Natural killer cell (primary cell): ENCODE measurements at regions of chr9 and their contacts with region 1.

Region 1: GRCh38 chr9:6757456-6758247 is at the start of gene KDM4C:
- DNase-seq: peak; percentile 94 to 98
- ATAC-seq: peak; percentile 75 to 93 (median 83)
- H3K4me3 ChIP-seq: peak within 1 kb of the TSS; percentile 70
- H3K4me3 Mint-ChIP-seq: peak within 1 kb of the TSS; percentile 97
- H3K27ac ChIP-seq: peak within 1 kb of the TSS; percentile 96
- H3K27ac Mint-ChIP-seq: peak within 1 kb of the TSS; percentile 98 to 99
- H3K4me1 ChIP-seq: peaks cover 16% of the 10 kb centered on the region
- H3K4me1 Mint-ChIP-seq: peaks cover 29 to 47% of the 10 kb centered on the region in 2 donors
- H3K27me3 ChIP-seq: no peaks in the 10 kb centered on the region
- H3K27me3 Mint-ChIP-seq: no peaks in the 10 kb centered on the region
- CTCF ChIP-seq: no peak
- total RNA-seq, gene KDM4C: 115 to 137 (median 116) TPM

Region 2: DNA sequence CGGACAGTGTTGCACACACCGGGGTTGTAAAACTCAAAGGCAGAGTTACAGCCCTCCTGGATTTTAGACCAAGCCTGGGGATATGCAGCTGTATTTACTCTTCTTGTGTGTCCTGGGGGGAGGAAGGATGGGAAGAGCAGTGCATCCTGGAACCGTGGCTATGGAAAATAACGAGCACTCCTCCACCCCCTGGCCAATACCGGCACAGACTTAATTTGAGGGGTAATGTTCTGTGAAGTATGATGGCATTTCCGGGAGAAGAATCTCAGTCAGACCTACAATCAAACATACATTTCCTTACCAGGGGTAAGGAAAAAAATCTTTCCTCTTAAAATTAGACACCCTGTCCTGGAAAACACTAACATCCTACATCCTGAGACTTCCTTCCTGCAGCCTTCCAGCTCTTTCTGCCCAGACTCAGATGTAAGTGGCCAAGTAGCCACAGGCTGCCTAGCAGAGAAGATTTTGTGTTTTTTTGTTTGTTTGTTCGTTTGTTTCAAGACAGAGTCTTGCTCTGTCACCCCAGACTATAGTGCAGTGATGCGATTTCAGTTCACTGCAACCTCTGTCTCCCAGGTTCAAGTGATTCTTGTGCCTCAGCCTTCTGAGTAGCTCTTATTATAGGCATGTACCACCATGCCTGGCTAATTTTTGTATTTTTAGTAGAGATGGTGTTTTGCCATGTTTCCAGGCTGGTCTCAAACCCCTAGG is 913.7 kb before region 1 on chr9:
- intact Hi-C with region 1: loop called (anchors 5 kb)
- DNase-seq: peak in 1 of 2 donors; percentile 31
- ATAC-seq: peak in 1 of 3 donors; percentile 27
- H3K4me3 ChIP-seq: no peak overlapping the region
- H3K4me3 Mint-ChIP-seq: peak overlapping the region; percentile 79
- H3K27ac ChIP-seq: peak overlapping the region; percentile 54
- H3K27ac Mint-ChIP-seq: peak overlapping the region; percentile 91
- H3K4me1 ChIP-seq: peaks cover 73% of the 10 kb centered on the region
- H3K4me1 Mint-ChIP-seq: peaks cover 78 to 85% of the 10 kb centered on the region in 2 donors
- H3K27me3 ChIP-seq: no peaks in the 10 kb centered on the region
- H3K27me3 Mint-ChIP-seq: no peaks in the 10 kb centered on the region
- CTCF ChIP-seq: no peak

Region 3: GRCh38 chr9:6356441-6356840 is 401.2 kb before region 1 on chr9:
- intact Hi-C with region 1: no loop called
- DNase-seq: no peak
- ATAC-seq: no peak
- H3K4me3 ChIP-seq: no peak overlapping the region
- H3K4me3 Mint-ChIP-seq: no peak overlapping the region
- H3K27ac ChIP-seq: no peak overlapping the region
- H3K27ac Mint-ChIP-seq: no peak overlapping the region
- H3K4me1 ChIP-seq: no peaks in the 10 kb centered on the region
- H3K4me1 Mint-ChIP-seq: peaks cover 0 to 5% of the 10 kb centered on the region in 2 donors
- H3K27me3 ChIP-seq: no peaks in the 10 kb centered on the region
- H3K27me3 Mint-ChIP-seq: peaks cover 6 to 13% of the 10 kb centered on the region in 2 donors
- CTCF ChIP-seq: no peak

Region 4: GRCh38 chr9:6681147-6681956 is 76.3 kb before region 1 on chr9:
- intact Hi-C with region 1: loop called (anchors 1 kb)
- DNase-seq: peak; percentile 79 to 96
- ATAC-seq: peak; percentile 85 to 95 (median 89)
- H3K4me3 ChIP-seq: peak overlapping the region; percentile 89
- H3K4me3 Mint-ChIP-seq: peak overlapping the region; percentile 96
- H3K27ac ChIP-seq: peak overlapping the region; percentile 97
- H3K27ac Mint-ChIP-seq: peak overlapping the region; percentile 97 to 98
- H3K4me1 ChIP-seq: peaks cover 16% of the 10 kb centered on the region
- H3K4me1 Mint-ChIP-seq: peaks cover 23 to 24% of the 10 kb centered on the region in 2 donors
- H3K27me3 ChIP-seq: no peaks in the 10 kb centered on the region
- H3K27me3 Mint-ChIP-seq: no peaks in the 10 kb centered on the region
- CTCF ChIP-seq: no peak

Region 5: DNA sequence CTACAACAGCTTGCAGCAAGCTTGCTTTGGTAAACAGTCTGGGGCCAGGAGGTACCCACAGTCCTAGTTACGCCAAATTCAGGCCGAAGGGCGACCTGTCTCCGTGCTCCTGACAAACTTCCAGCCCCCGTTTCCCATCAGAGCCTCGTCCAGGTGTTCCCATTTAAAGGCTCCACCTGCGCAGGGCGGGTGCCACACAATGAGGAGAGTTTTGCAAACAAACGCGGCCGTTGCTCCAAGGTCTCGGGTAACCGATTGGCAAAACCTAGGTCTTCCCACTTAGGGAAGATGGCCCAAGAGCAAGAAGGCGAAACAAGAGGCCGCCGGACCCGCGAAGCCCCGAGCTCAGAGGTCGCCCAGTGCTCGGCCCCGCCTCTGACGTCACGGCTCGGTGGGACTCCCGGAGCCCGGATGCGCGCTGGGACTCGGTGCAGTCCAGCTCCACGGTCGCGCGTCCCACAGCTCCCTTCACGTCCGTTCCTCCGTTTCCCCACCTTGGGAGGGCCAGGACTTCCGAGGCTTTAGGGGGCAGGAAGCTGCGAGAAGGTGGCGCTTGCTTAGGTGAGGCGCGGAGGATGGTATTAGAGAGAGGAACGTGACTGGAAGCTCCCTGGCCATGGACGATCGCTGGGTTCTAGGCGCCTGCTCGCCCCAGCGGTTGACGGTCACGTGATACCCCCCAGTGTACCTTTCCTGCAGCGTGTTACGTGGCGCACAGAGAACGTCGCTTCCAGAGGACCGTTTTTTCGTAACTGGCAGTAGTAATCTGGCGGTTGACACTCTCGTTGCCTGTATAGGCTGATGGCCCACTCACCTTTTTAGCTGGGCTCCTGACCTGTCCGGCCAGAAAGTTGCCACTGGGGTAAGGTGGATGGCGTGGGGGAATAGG is 41.7 kb before region 1 on chr9:
- intact Hi-C with region 1: loop called (anchors 5 kb)
- DNase-seq: peak; percentile 43 to 84
- ATAC-seq: peak; percentile 77 to 91 (median 85)
- H3K4me3 ChIP-seq: peak overlapping the region; percentile 53
- H3K4me3 Mint-ChIP-seq: peak overlapping the region; percentile 86
- H3K27ac ChIP-seq: peak overlapping the region; percentile 56
- H3K27ac Mint-ChIP-seq: peak overlapping the region; percentile 67 to 81
- H3K4me1 ChIP-seq: peaks cover 17% of the 10 kb centered on the region
- H3K4me1 Mint-ChIP-seq: peaks cover 9 to 11% of the 10 kb centered on the region in 2 donors
- H3K27me3 ChIP-seq: no peaks in the 10 kb centered on the region
- H3K27me3 Mint-ChIP-seq: peaks cover 0 to 2% of the 10 kb centered on the region in 2 donors
- CTCF ChIP-seq: no peak